ENCODE measurements at regions of chr5 and their contacts with region 1.

Region 1: GRCh38 chr5:133051580-133052332 is at the start of gene HSPA4:
- H3K4me3 Mint-ChIP-seq: peak within 1 kb of the TSS; percentile 93
- H3K27ac Mint-ChIP-seq: peak within 1 kb of the TSS; percentile 99
- H3K4me1 Mint-ChIP-seq: peaks cover 41% of the 10 kb centered on the region
- H3K27me3 Mint-ChIP-seq: peaks cover 10% of the 10 kb centered on the region

Region 2: GRCh38 chr5:132901730-132902129 is 150.0 kb before region 1 on chr5:
- intact Hi-C with region 1: no loop called
- H3K4me3 Mint-ChIP-seq: no peak overlapping the region
- H3K27ac Mint-ChIP-seq: no peak overlapping the region
- H3K4me1 Mint-ChIP-seq: peaks cover 6% of the 10 kb centered on the region
- H3K27me3 Mint-ChIP-seq: no peaks in the 10 kb centered on the region

Region 3: DNA sequence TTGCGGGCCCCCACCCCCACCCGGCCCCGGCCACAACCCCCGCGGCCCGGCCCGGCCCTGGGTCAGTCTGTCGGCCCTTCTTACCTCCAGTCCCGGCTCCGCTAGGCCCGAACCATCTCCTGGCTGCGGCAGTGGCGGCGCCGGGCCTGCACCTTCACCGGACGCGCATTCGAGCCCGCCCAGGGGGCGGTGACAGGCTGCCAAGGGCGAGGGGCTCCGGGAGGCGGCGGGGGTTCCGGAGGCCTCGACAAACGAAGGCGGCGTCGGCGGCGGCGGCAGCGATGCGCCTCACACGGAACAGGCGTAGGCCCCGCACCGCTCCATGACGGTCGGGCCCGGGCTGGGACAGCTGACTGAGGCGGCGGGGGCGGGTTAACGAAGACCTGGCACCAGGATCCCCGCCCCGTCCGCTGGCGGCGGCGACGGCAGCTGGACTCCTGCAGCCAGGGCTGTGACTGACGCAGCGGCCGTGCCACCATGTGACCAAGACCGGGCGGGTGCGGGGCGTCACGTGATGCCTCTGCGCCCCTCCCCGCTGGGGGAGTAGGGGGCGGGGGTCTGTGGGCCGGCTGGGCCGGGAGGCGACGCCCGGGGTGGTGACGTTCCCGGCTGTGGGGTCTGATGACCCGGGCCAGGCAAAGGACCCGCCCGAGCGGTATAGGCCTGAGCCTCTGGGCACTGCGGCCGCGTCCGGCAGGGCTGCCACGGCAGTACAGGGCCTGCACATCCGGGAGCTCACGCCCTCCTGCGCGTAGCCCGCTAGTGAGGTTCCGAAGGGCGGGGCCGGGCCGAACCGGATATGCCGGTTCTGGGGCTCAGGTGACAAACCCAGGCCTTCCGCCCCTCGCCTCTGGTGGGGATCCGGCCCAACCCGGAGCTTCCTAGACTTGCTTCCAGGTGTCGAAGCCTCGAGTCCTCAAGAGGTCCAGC is 88.3 kb before region 1 on chr5 and contains the start of gene AFF4:
- intact Hi-C with region 1: loop called (anchors 1 kb)
- H3K4me3 Mint-ChIP-seq: peak within 1 kb of the TSS; percentile 86
- H3K27ac Mint-ChIP-seq: peak within 1 kb of the TSS; percentile 93
- H3K4me1 Mint-ChIP-seq: peaks cover 2% of the 10 kb centered on the region
- H3K27me3 Mint-ChIP-seq: no peaks in the 10 kb centered on the region

Region 4: GRCh38 chr5:133025804-133026663 is 25.7 kb before region 1 on chr5 and contains the start of gene ZCCHC10:
- intact Hi-C with region 1: loop called (anchors 1 kb)
- H3K4me3 Mint-ChIP-seq: peak within 1 kb of the TSS; percentile 85
- H3K27ac Mint-ChIP-seq: peak within 1 kb of the TSS; percentile 98
- H3K4me1 Mint-ChIP-seq: peaks cover 17% of the 10 kb centered on the region
- H3K27me3 Mint-ChIP-seq: peaks cover 4% of the 10 kb centered on the region

Region 5: DNA sequence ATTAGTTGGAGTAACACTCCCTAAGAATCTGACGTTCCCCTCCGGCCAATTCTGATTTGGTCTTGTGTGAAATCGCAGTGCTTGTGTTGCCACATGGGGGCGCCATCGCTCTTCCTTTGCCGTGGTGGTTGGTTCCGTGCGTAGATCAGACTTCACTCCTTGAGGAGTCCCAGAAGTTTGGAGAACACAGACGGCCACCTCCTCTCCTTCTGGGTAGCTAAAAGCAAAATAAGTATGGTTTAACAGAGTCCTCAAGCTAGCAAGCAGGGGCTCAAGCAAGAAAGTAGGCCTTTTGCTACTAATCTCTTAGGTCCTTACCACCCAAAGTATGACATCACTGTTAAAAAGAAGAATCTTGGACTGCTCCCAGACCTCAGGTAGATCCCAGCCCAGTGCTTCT is 59.5 kb after region 1 on chr5:
- intact Hi-C with region 1: no loop called
- H3K4me3 Mint-ChIP-seq: no peak overlapping the region
- H3K27ac Mint-ChIP-seq: no peak overlapping the region
- H3K4me1 Mint-ChIP-seq: peaks cover 6% of the 10 kb centered on the region
- H3K27me3 Mint-ChIP-seq: peaks cover 10% of the 10 kb centered on the region

Measured in dendritic cell treated with granulocyte-macrophage colony-stimulating factor and Interleukin-4, amounts not matched to agents 40 ng/mL and 50 ng/mL, for 4 days (primary cell).